ENCODE measurements at regions of chr22 and their contacts with region 1.

Region 1: GRCh38 chr22:43036282-43036829 is 21.4 kb upstream of the PACSIN2 start:
- DNase-seq: no peak
- ATAC-seq: no peak
- H3K4me3 ChIP-seq: no peak overlapping the region
- H3K27ac ChIP-seq: no peak overlapping the region
- H3K4me1 ChIP-seq: no peaks in the 10 kb centered on the region
- H3K27me3 ChIP-seq: no peaks in the 10 kb centered on the region
- CTCF ChIP-seq: no peak

Region 2: GRCh38 chr22:42910221-42910942 is 126.0 kb before region 1 on chr22:
- CTCF ChIA-PET with region 1: no interaction called
- POLR2A ChIA-PET with region 1: no interaction called
- in situ Hi-C with region 1: no loop called
- intact Hi-C with region 1: no loop called
- DNase-seq: no peak
- ATAC-seq: no peak
- H3K4me3 ChIP-seq: no peak overlapping the region
- H3K27ac ChIP-seq: no peak overlapping the region
- H3K4me1 ChIP-seq: no peaks in the 10 kb centered on the region
- H3K27me3 ChIP-seq: no peaks in the 10 kb centered on the region
- CTCF ChIP-seq: no peak

Region 3: GRCh38 chr22:43053176-43053575 is 16.8 kb after region 1 on chr22:
- CTCF ChIA-PET with region 1: no interaction called
- POLR2A ChIA-PET with region 1: interaction called, 11 read pairs
- in situ Hi-C with region 1: no loop called
- intact Hi-C with region 1: no loop called
- DNase-seq: no peak
- ATAC-seq: no peak; the same call in 1 of the 2 replicates
- H3K4me3 ChIP-seq: no peak overlapping the region
- H3K27ac ChIP-seq: no peak overlapping the region
- H3K4me1 ChIP-seq: no peaks in the 10 kb centered on the region
- H3K27me3 ChIP-seq: no peaks in the 10 kb centered on the region
- CTCF ChIP-seq: peak; percentile 5; the same call in 1 of the 2 replicates